ENCODE measurements at regions of chr11 and their contacts with region 1.

Region 1: GRCh38 chr11:43358801-43359421 is at the start of gene TTC17:
- DNase-seq: peak; percentile 93
- ATAC-seq: peak; percentile 95
- H3K4me3 Mint-ChIP-seq: peak within 1 kb of the TSS; percentile 97
- H3K27ac Mint-ChIP-seq: peak within 1 kb of the TSS; percentile 97
- H3K4me1 Mint-ChIP-seq: peaks cover 28% of the 10 kb centered on the region
- H3K27me3 Mint-ChIP-seq: no peaks in the 10 kb centered on the region
- total RNA-seq, gene TTC17: 87.6 to 89.6 TPM

Region 2: GRCh38 chr11:43298397-43298796 is 60.5 kb before region 1 on chr11:
- POLR2A ChIA-PET with region 1: no interaction called
- DNase-seq: no peak
- ATAC-seq: no peak
- H3K4me3 Mint-ChIP-seq: no peak overlapping the region
- H3K27ac Mint-ChIP-seq: no peak overlapping the region
- H3K4me1 Mint-ChIP-seq: no peaks in the 10 kb centered on the region
- H3K27me3 Mint-ChIP-seq: peaks cover 3% of the 10 kb centered on the region

Region 3: DNA sequence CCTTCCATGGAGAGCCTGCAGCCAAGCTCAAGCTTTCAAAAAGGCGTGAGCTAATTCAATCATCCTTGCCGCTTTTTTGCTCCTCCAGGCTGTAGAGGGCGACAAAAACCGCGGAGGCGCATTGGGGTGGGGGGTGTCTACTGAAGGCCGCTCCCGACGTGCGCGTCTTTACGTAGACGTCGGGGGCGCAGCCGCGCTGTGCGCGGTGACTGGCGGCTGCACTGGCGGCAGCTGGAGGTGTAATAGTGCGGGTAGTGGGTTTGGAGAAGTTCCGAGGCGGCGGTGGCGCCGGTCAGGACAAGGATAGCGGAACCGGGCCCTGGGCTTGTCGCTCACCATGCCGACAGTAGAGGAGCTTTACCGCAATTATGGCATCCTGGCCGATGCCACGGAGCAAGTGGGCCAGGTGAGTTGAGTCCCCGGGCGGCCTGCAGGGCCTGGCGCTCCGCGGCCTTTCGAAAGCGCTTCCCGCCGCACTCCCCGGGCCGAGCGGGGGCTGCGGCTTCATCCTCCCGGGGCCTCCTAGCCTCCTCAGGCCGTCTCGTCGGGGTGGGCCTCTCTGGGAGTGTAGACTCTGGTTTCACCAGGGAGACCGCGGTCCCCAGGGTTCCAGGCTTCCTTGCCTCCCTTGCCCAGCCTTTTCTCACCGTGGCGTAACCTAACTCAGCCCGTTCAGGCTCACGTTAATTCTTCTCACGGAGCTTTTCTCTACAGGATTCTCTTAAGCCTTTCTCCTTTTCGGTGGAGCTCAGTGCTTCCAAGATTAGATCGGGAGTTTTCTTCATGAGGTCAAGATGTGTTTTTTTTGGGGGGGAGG is 46.9 kb before region 1 on chr11 and contains the start of gene API5:
- POLR2A ChIA-PET with region 1: interaction called, 52 read pairs
- DNase-seq: peak; percentile 90
- ATAC-seq: peak; percentile 94
- H3K4me3 Mint-ChIP-seq: peak within 1 kb of the TSS; percentile 99
- H3K27ac Mint-ChIP-seq: peak within 1 kb of the TSS; percentile 92
- H3K4me1 Mint-ChIP-seq: peaks cover 39% of the 10 kb centered on the region
- H3K27me3 Mint-ChIP-seq: no peaks in the 10 kb centered on the region
- total RNA-seq, gene API5: 101 TPM

Region 4: GRCh38 chr11:43341159-43341558 is 17.8 kb before region 1 on chr11:
- POLR2A ChIA-PET with region 1: no interaction called
- DNase-seq: no peak
- ATAC-seq: no peak
- H3K4me3 Mint-ChIP-seq: no peak overlapping the region
- H3K27ac Mint-ChIP-seq: no peak overlapping the region
- H3K4me1 Mint-ChIP-seq: no peaks in the 10 kb centered on the region
- H3K27me3 Mint-ChIP-seq: no peaks in the 10 kb centered on the region

Measured in activated naive CD8-positive, alpha-beta T cell treated with anti-CD3 and anti-CD28 coated beads, Interleukin-2, amount 10 ng/mL, durations not matched to agents 7 days and 5 days (primary cell).